Mammary epithelial cell (primary cell): ENCODE measurements at regions of chr5 and their contacts with region 1.

Region 1: GRCh38 chr5:142769741-142770631 is at the start of gene ARHGAP26:
- DNase-seq: peak; percentile 97
- H3K4me3 ChIP-seq: peak within 1 kb of the TSS; percentile 90 to 100 (median 90)
- H3K27ac ChIP-seq: peak within 1 kb of the TSS; percentile 45
- H3K4me1 ChIP-seq: peaks cover 18% of the 10 kb centered on the region
- H3K27me3 ChIP-seq: no peaks in the 10 kb centered on the region
- CTCF ChIP-seq: peak in 1 of 2 donors; percentile 49
- total RNA-seq, gene ARHGAP26: 23.8 to 34.0 TPM

Region 2: GRCh38 chr5:142720641-142721271 is 49.2 kb before region 1 on chr5:
- CTCF ChIA-PET with region 1: no interaction called
- dilution Hi-C with region 1: no loop called
- in situ Hi-C with region 1: no loop called
- intact Hi-C with region 1: loop called (anchors 1 kb)
- DNase-seq: peak; percentile 100
- H3K4me3 ChIP-seq: peak overlapping the region in 1 of 3 experiments; percentile 13
- H3K27ac ChIP-seq: peak overlapping the region; percentile 92
- H3K4me1 ChIP-seq: peaks cover 44% of the 10 kb centered on the region
- H3K27me3 ChIP-seq: no peaks in the 10 kb centered on the region
- CTCF ChIP-seq: peak; percentile 21 to 57

Region 3: GRCh38 chr5:142726188-142726731 is 43.7 kb before region 1 on chr5:
- CTCF ChIA-PET with region 1: no interaction called
- dilution Hi-C with region 1: no loop called
- in situ Hi-C with region 1: no loop called
- intact Hi-C with region 1: loop called (anchors 1 kb)
- DNase-seq: peak; percentile 90
- H3K4me3 ChIP-seq: no peak overlapping the region
- H3K27ac ChIP-seq: peak overlapping the region; percentile 96
- H3K4me1 ChIP-seq: peaks cover 36% of the 10 kb centered on the region
- H3K27me3 ChIP-seq: no peaks in the 10 kb centered on the region
- CTCF ChIP-seq: no peak

Region 4: GRCh38 chr5:142748568-142749249 is 21.3 kb before region 1 on chr5:
- CTCF ChIA-PET with region 1: no interaction called
- dilution Hi-C with region 1: no loop called
- in situ Hi-C with region 1: no loop called
- intact Hi-C with region 1: loop called (anchors 1 kb)
- DNase-seq: peak; percentile 76
- H3K4me3 ChIP-seq: no peak overlapping the region
- H3K27ac ChIP-seq: peak overlapping the region; percentile 28
- H3K4me1 ChIP-seq: peaks cover 26% of the 10 kb centered on the region
- H3K27me3 ChIP-seq: no peaks in the 10 kb centered on the region
- CTCF ChIP-seq: peak; percentile 44 to 55

Region 5: GRCh38 chr5:142826741-142827732 is 57.1 kb after region 1 on chr5:
- CTCF ChIA-PET with region 1: no interaction called
- dilution Hi-C with region 1: no loop called
- in situ Hi-C with region 1: no loop called
- intact Hi-C with region 1: loop called (anchors 2 kb)
- DNase-seq: peak; percentile 82
- H3K4me3 ChIP-seq: no peak overlapping the region
- H3K27ac ChIP-seq: peak overlapping the region; percentile 15
- H3K4me1 ChIP-seq: peaks cover 54% of the 10 kb centered on the region
- H3K27me3 ChIP-seq: no peaks in the 10 kb centered on the region
- CTCF ChIP-seq: no peak

Region 6: DNA sequence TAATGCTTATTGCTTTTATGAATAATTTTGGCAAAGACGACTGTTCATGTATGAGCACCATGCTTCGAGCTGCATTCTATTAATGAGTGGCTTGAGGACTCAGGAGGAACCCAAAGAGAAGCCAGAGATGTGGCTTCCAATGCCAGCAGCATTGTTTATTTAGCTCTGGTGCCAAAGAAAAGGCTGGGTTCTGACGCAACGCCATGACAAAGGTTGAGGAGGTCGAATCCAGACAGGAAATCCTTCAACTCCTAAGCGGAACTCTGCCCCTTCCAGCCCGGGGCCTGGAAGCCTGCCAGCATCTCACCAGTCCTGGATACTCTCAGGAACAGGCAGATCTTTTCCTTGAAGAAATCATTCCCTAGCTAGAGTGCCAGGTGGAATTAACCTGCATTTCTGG is 104.6 kb after region 1 on chr5:
- CTCF ChIA-PET with region 1: no interaction called
- dilution Hi-C with region 1: no loop called
- in situ Hi-C with region 1: loop called in 1 of 2 experiments (anchors 10 kb)
- intact Hi-C with region 1: no loop called
- DNase-seq: peak; percentile 72
- H3K4me3 ChIP-seq: no peak overlapping the region
- H3K27ac ChIP-seq: peak overlapping the region; percentile 0
- H3K4me1 ChIP-seq: peaks cover 46% of the 10 kb centered on the region
- H3K27me3 ChIP-seq: no peaks in the 10 kb centered on the region
- CTCF ChIP-seq: no peak